ENCODE measurements at regions of chrX and their contacts with region 1.

Region 1: DNA sequence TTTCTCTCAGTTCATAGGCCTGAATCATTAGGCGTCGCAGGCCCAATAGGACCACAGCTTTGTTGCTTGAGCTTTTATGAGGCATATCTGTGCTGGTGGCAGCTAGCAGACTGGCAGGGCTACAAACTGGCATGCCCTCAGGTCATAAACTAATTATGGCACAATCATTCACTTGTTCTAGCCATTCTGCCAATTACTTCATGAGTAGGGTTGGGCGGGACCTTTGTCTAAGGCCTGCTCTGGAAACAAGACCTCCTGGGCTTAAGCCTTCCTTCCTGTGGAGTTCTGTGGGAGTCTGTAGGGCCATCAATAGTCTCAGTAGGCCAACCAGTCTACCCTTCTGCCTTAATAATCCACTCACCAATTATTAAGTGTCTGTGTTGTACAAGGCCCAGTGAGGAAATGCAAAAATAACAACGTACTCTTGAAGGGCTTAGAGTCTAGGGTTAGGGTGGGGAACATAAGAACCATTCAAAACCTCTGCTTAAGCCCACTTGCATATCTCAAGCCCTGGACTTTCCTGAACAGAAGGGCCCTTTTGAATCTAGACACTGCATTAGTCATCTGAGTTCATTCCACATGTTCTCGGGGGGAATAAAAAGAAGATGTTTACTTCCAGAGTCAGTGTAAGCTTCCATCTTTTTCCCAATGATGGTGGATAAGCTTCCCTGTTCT is 44.5 kb downstream of the SHROOM4 start:
- DNase-seq: no peak

Region 2: DNA sequence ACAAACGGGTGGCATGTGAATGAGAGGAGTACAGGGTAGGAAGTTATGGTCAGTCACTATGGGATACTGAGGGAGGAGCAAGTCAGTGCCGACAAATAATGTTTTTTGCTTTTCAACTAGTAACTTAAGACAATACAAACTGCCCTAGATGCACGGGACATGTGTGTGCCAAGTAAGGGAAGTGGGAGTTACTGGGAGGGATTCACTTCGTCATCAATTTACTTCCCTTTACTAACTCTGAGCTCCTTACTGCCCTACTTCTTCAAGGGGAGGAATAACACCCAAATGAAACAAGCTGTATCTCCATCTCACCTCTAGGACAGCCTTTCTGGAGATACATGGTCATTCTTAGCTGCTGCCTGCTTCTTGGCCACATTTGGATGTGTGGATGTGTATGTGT is 396.6 kb before region 1 on chrX:
- intact Hi-C with region 1: no loop called
- DNase-seq: no peak

Region 3: DNA sequence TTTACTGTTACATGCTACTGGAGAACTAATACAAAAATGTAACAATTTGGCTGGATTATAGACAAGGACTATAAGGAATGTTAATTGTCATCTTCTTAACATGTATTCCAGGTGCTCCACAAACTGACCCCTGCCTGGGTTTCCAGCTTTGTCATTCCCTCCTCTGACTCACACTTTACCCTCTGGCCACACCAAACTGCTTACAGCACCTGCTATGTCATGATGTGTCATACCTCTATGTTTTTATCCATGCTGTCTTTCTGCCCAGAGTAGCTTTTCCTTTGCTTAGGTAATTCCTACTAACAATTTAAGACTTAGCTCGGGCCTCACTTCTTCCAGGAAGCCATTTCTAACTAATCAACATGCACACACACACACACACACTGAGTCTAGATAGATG is 58.5 kb after region 1 on chrX:
- intact Hi-C with region 1: loop called (anchors 10 kb)
- DNase-seq: no peak